ENCODE measurements at regions of chr11 and their contacts with region 1.

Region 1: DNA sequence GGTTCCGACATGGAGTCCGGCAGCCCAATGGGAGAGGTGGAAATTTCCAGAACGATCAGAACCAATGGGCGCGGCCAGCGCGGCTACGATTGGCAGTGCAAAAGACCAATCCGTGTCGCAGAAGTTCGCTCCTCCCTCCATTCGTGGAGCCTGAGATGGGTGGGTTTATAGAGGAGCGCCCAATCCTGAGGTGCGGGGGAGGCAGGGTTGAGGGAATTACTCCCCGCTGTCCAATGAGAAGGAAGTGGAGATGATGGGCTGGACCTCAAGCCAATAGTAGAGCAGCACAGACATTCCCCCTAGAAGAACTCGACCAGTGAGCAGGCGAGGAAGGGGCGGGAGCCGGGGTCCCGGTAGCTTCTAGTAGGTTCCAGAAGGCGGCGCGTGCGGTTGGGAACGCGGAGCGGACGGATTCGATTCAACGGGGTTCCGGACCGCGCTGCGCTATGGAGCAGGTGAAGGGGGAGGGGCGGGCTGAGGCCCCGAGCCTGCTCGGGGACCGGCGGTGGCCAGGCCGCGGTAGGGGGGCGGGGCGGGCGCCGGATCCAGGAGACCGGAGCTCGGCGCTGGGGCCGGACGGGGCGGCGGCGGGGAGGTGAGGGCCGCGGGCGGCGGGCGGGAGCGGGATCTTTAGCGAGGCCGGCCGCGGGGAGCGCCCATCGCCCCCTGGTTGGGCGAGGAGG is at the start of gene STIP1:
- DNase-seq: peak in 13 of 14 experiments; percentile 94 to 100 (median 97)
- ATAC-seq: peak; percentile 87
- H3K4me3 ChIP-seq: peak within 1 kb of the TSS; percentile 80
- H3K4me3 Mint-ChIP-seq: peak within 1 kb of the TSS; percentile 99
- H3K27ac ChIP-seq: peak within 1 kb of the TSS; percentile 47 to 57
- H3K27ac Mint-ChIP-seq: no peak within 1 kb of the TSS
- H3K4me1 ChIP-seq: peaks cover 41% of the 10 kb centered on the region
- H3K4me1 Mint-ChIP-seq: peaks cover 45% of the 10 kb centered on the region
- H3K27me3 ChIP-seq: no peaks in the 10 kb centered on the region
- H3K27me3 Mint-ChIP-seq: no peaks in the 10 kb centered on the region
- CTCF ChIP-seq: peak; percentile 15
- total RNA-seq, gene STIP1: 29.0 to 37.5 TPM

Region 2: DNA sequence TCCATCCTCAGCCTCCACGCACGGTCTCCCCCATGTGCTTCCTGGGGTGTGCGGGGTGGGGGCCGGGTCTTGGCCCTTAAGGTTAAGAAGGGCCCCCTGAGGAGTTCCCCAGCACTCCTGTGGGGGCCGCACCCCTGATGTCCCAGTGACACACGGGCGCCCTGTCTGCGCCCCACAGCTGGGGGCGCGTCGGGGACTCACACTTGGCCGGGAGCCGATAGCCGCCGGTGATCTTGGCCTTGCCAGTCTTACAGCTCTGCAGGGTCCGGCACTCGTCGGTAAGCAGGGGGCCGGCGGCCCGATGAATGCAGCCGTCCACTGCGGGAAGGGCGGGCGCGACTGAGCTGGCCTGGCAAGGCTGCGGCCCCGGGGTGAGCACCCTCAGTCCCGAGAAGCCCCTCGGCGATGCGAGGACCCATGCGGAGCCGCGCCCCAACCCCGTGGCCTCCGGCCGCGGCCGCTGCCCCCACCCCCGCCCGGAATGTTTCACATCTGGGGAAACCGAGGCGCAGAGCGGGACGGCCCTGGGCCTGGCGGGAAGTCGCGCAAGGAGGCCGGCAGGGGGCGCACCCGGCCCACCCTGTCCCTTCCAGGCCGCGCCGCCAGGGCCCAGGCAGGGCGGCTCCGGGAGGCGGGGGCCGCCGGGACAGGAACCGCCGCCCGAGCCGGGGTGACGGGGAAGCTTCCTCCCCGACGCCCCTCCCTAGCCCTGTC is 185.8 kb before region 1 on chr11:
- CTCF ChIA-PET with region 1: interaction called, 3 read pairs
- POLR2A ChIA-PET with region 1: interaction called, 13 read pairs
- intact Hi-C with region 1: no loop called
- DNase-seq: peak; percentile 53 to 91 (median 70)
- ATAC-seq: peak; percentile 76
- H3K4me3 ChIP-seq: peak overlapping the region; percentile 41
- H3K4me3 Mint-ChIP-seq: peak overlapping the region; percentile 11
- H3K27ac ChIP-seq: no peak overlapping the region
- H3K27ac Mint-ChIP-seq: no peak overlapping the region
- H3K4me1 ChIP-seq: peaks cover 28% of the 10 kb centered on the region
- H3K4me1 Mint-ChIP-seq: peaks cover 9% of the 10 kb centered on the region
- H3K27me3 ChIP-seq: peaks cover 0 to 3% of the 10 kb centered on the region in 2 experiments
- H3K27me3 Mint-ChIP-seq: no peaks in the 10 kb centered on the region
- CTCF ChIP-seq: peak; percentile 75

Region 3: GRCh38 chr11:64165849-64166635 is 19.9 kb before region 1 on chr11 and contains the start of gene MACROD1:
- CTCF ChIA-PET with region 1: interaction called, 5 read pairs
- POLR2A ChIA-PET with region 1: interaction called, 22 read pairs
- intact Hi-C with region 1: loop called in 1 of 2 experiments (anchors 2 kb)
- DNase-seq: peak; percentile 51 to 88 (median 70)
- ATAC-seq: peak; percentile 91
- H3K4me3 ChIP-seq: peak within 1 kb of the TSS; percentile 66
- H3K4me3 Mint-ChIP-seq: peak within 1 kb of the TSS; percentile 92
- H3K27ac ChIP-seq: no peak within 1 kb of the TSS
- H3K27ac Mint-ChIP-seq: no peak within 1 kb of the TSS
- H3K4me1 ChIP-seq: peaks cover 18% of the 10 kb centered on the region
- H3K4me1 Mint-ChIP-seq: peaks cover 4% of the 10 kb centered on the region
- H3K27me3 ChIP-seq: no peaks in the 10 kb centered on the region
- H3K27me3 Mint-ChIP-seq: no peaks in the 10 kb centered on the region
- CTCF ChIP-seq: no peak
- total RNA-seq, gene MACROD1: 6.0 to 6.3 TPM

Region 4: GRCh38 chr11:64225612-64226506 is 39.9 kb after region 1 on chr11 and contains the starts of genes NUDT22 and TRPT1:
- CTCF ChIA-PET with region 1: interaction called, 5 read pairs
- POLR2A ChIA-PET with region 1: interaction called, 7 read pairs
- intact Hi-C with region 1: loop called (anchors 1 to 5 kb)
- DNase-seq: peak; percentile 79 to 96 (median 91)
- ATAC-seq: peak; percentile 67
- H3K4me3 ChIP-seq: peak within 1 kb of the TSS; percentile 99
- H3K4me3 Mint-ChIP-seq: peak within 1 kb of the TSS; percentile 97
- H3K27ac ChIP-seq: peak within 1 kb of the TSS; percentile 77 to 87
- H3K27ac Mint-ChIP-seq: peak within 1 kb of the TSS; percentile 87
- H3K4me1 ChIP-seq: peaks cover 57% of the 10 kb centered on the region
- H3K4me1 Mint-ChIP-seq: peaks cover 39% of the 10 kb centered on the region
- H3K27me3 ChIP-seq: no peaks in the 10 kb centered on the region
- H3K27me3 Mint-ChIP-seq: no peaks in the 10 kb centered on the region
- CTCF ChIP-seq: peak; percentile 7
- total RNA-seq, gene NUDT22: 26.8 to 26.9 TPM
- total RNA-seq, gene TRPT1: 11.3 to 11.5 TPM

Region 5: GRCh38 chr11:64246871-64247728 is 61.1 kb after region 1 on chr11 and contains the start of gene PPP1R14B:
- CTCF ChIA-PET with region 1: interaction called, 5 read pairs
- POLR2A ChIA-PET with region 1: interaction called, 13 read pairs
- intact Hi-C with region 1: loop called in 1 of 2 experiments (anchors 5 kb)
- DNase-seq: peak; percentile 60 to 89 (median 76)
- ATAC-seq: peak; percentile 63
- H3K4me3 ChIP-seq: peak within 1 kb of the TSS; percentile 90
- H3K4me3 Mint-ChIP-seq: peak within 1 kb of the TSS; percentile 94
- H3K27ac ChIP-seq: peak within 1 kb of the TSS; percentile 48 to 57
- H3K27ac Mint-ChIP-seq: peak within 1 kb of the TSS; percentile 82
- H3K4me1 ChIP-seq: peaks cover 61% of the 10 kb centered on the region
- H3K4me1 Mint-ChIP-seq: peaks cover 41% of the 10 kb centered on the region
- H3K27me3 ChIP-seq: no peaks in the 10 kb centered on the region
- H3K27me3 Mint-ChIP-seq: no peaks in the 10 kb centered on the region
- CTCF ChIP-seq: no peak
- total RNA-seq, gene PPP1R14B: 17.1 to 21.0 TPM

Measured in CD4-positive, alpha-beta T cell (primary cell).